Mammary epithelial cell (primary cell): ENCODE measurements at regions of chr5 and their contacts with region 1.

Region 1: DNA sequence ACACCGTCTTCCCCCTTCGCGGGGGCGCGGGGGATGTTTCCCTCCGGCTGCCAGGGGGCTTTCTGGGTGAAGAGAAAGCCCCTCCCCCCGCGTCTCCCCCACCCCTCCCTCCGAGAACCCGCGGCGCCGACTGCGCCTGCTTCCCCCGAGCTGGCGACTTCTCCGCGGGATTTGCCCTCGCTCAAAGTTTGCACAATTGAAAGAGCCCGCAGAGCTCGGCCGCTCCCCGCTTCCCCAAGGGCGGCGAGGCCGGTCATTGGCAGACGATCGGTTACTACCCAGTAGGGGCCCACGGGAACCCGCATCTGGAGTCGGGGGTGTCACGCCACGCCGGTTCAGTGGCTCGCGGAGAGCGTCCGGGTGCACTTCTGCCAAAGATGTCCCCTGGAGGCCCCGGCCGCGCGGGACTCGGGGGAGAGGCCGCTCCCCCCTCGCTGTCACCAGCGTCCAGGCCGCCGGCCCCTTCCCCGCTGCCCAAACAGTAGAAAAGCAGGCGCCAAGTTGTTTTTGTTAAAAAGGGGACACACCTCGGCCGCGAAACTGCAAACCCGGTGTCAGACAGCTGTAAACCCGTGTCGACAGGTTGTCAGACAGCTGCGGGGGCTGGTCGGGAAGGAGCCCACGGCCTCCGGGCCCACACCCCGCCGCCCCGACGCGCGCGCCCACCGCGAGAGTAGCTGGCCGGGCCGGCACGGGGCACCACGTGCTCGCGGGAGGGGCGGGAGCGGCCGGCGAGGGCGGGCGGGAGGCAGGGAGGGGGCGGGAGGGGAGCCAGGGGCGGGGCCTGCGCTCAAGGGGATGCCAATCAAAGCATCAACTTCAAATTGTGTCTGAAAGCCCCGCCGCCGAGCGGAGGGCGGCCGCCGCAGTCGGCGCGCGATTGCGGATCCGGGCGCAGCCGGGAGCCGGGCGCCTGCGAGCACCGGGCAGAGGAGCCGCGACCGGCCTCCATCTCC is at the start of gene IRX1:
- DNase-seq: peak; percentile 73
- H3K4me3 ChIP-seq: peak within 1 kb of the TSS; percentile 82 to 100 (median 97)
- H3K27ac ChIP-seq: peak within 1 kb of the TSS; percentile 96
- H3K4me1 ChIP-seq: peaks cover 14% of the 10 kb centered on the region
- H3K27me3 ChIP-seq: no peaks in the 10 kb centered on the region
- CTCF ChIP-seq: no peak
- total RNA-seq, gene IRX1: 29.8 to 200 TPM

Region 2: DNA sequence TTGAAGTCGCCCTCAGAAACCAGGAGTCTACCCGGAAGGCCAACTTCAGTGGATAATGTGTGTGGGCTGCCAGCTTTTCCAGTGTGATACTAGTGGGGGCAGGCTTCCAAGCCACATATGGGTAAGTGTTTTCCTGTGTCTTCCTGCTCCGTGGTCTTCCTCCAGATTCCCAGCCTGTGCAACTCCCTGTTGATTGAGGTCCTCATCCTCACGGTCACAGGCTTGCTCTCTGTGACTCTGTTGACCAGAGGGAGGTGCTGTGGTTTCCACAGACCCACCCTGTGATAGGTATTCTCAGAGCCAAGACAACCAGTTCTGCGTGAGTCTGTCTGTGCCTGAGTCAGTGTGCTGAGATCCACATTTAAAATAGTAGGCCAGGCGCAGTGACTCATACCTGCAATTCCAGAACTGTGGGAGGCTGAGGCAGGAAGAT is 455.8 kb before region 1 on chr5:
- CTCF ChIA-PET with region 1: no interaction called
- dilution Hi-C with region 1: no loop called
- in situ Hi-C with region 1: no loop called
- intact Hi-C with region 1: loop called (anchors 5 kb)
- DNase-seq: peak; percentile 86
- H3K4me3 ChIP-seq: no peak overlapping the region
- H3K27ac ChIP-seq: no peak overlapping the region
- H3K4me1 ChIP-seq: no peaks in the 10 kb centered on the region
- H3K27me3 ChIP-seq: peaks cover 3% of the 10 kb centered on the region
- CTCF ChIP-seq: peak; percentile 23 to 51

Region 3: GRCh38 chr5:3509289-3509688 is 86.0 kb before region 1 on chr5:
- CTCF ChIA-PET with region 1: no interaction called
- dilution Hi-C with region 1: no loop called
- in situ Hi-C with region 1: no loop called
- intact Hi-C with region 1: no loop called
- DNase-seq: no peak
- H3K4me3 ChIP-seq: no peak overlapping the region
- H3K27ac ChIP-seq: no peak overlapping the region
- H3K4me1 ChIP-seq: no peaks in the 10 kb centered on the region
- H3K27me3 ChIP-seq: no peaks in the 10 kb centered on the region
- CTCF ChIP-seq: peak; percentile 44 to 46

Region 4: GRCh38 chr5:4405614-4406219 is 810.4 kb after region 1 on chr5:
- CTCF ChIA-PET with region 1: no interaction called
- dilution Hi-C with region 1: no loop called
- in situ Hi-C with region 1: no loop called
- intact Hi-C with region 1: no loop called
- DNase-seq: no peak
- H3K4me3 ChIP-seq: no peak overlapping the region
- H3K27ac ChIP-seq: no peak overlapping the region
- H3K4me1 ChIP-seq: no peaks in the 10 kb centered on the region
- H3K27me3 ChIP-seq: no peaks in the 10 kb centered on the region
- CTCF ChIP-seq: no peak